ENCODE measurements at regions of chrX and their contacts with region 1.

Region 1: GRCh38 chrX:149987613-149988012 is 49.3 kb upstream of the EOLA2 start:
- DNase-seq: no peak
- ATAC-seq: no peak

Region 2: GRCh38 chrX:150049647-150050046 is 62.0 kb after region 1 on chrX:
- intact Hi-C with region 1: no loop called
- DNase-seq: no peak
- ATAC-seq: no peak

Region 3: GRCh38 chrX:150094996-150095395 is 107.4 kb after region 1 on chrX:
- intact Hi-C with region 1: loop called (anchors 10 kb)
- DNase-seq: no peak
- ATAC-seq: no peak

Measured in Right ventricle myocardium inferior (tissue), 1 donor.